Colonic mucosa (tissue), 4 donors: ENCODE measurements at regions of chr18 and their contacts with region 1.

Region 1: GRCh38 chr18:65725251-65726050 is 25.4 kb upstream of the CDH7 start:
- DNase-seq: peak; percentile 44
- H3K4me3 ChIP-seq: no peak overlapping the region
- H3K27ac ChIP-seq: no peak overlapping the region
- H3K4me1 ChIP-seq: no peaks in the 10 kb centered on the region
- H3K27me3 ChIP-seq: no peaks in the 10 kb centered on the region
- CTCF ChIP-seq: peak; percentile 47

Region 2: DNA sequence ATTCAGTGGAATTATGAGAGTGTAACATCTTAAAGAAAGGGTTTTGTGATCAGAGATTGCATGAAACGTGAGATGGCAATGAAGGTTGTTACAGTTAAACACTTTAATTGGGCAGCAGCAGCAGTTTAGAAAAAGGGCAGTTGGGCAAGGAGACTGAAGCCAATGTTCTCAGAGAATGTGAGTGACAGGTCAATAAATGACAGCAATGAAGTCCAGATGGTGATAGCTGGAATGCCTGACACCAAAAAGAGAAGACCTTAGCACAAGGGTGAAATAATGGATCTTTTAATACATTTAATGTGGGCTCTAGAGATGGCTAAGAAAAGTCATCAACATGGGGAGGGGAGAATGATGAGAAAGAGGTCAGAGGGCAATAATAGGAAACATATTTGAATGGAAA is 64.1 kb before region 1 on chr18:
- intact Hi-C with region 1: no loop called
- DNase-seq: no peak
- H3K4me3 ChIP-seq: no peak overlapping the region
- H3K27ac ChIP-seq: no peak overlapping the region
- H3K4me1 ChIP-seq: no peaks in the 10 kb centered on the region
- H3K27me3 ChIP-seq: no peaks in the 10 kb centered on the region
- CTCF ChIP-seq: no peak

Region 3: GRCh38 chr18:66046032-66046602 is 320.7 kb after region 1 on chr18:
- intact Hi-C with region 1: loop called (anchors 10 kb)
- DNase-seq: peak; percentile 17
- H3K4me3 ChIP-seq: no peak overlapping the region
- H3K27ac ChIP-seq: no peak overlapping the region
- H3K4me1 ChIP-seq: no peaks in the 10 kb centered on the region
- H3K27me3 ChIP-seq: no peaks in the 10 kb centered on the region
- CTCF ChIP-seq: no peak

Region 4: GRCh38 chr18:66235206-66235605 is 509.8 kb after region 1 on chr18:
- intact Hi-C with region 1: no loop called
- DNase-seq: no peak
- H3K4me3 ChIP-seq: no peak overlapping the region
- H3K27ac ChIP-seq: no peak overlapping the region
- H3K4me1 ChIP-seq: no peaks in the 10 kb centered on the region
- H3K27me3 ChIP-seq: no peaks in the 10 kb centered on the region
- CTCF ChIP-seq: no peak

Region 5: DNA sequence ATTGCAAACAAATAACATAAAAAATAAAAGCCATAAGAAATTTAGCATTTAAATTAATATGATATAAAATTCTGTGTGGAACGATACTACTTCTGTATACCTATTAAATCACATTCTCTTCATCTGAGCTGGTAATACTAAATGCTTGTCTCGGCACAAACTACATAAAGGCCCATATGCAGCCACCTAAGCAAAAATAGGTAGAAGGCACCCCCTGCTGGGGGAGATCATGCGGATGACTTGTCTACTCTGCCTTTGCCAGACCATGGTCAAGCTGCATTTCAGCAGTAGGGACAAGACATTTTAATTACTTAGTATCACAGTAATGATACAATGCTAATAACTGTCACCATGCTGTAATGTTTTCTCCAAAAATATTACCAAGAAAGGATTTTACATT is 770.4 kb after region 1 on chr18:
- intact Hi-C with region 1: loop called (anchors 10 kb)
- DNase-seq: peak; percentile 49
- H3K4me3 ChIP-seq: no peak overlapping the region
- H3K27ac ChIP-seq: no peak overlapping the region
- H3K4me1 ChIP-seq: no peaks in the 10 kb centered on the region
- H3K27me3 ChIP-seq: no peaks in the 10 kb centered on the region
- CTCF ChIP-seq: peak; percentile 37